Head of caudate nucleus (tissue), 42 donors: ENCODE measurements at regions of chr3 and their contacts with region 1.

Region 1: DNA sequence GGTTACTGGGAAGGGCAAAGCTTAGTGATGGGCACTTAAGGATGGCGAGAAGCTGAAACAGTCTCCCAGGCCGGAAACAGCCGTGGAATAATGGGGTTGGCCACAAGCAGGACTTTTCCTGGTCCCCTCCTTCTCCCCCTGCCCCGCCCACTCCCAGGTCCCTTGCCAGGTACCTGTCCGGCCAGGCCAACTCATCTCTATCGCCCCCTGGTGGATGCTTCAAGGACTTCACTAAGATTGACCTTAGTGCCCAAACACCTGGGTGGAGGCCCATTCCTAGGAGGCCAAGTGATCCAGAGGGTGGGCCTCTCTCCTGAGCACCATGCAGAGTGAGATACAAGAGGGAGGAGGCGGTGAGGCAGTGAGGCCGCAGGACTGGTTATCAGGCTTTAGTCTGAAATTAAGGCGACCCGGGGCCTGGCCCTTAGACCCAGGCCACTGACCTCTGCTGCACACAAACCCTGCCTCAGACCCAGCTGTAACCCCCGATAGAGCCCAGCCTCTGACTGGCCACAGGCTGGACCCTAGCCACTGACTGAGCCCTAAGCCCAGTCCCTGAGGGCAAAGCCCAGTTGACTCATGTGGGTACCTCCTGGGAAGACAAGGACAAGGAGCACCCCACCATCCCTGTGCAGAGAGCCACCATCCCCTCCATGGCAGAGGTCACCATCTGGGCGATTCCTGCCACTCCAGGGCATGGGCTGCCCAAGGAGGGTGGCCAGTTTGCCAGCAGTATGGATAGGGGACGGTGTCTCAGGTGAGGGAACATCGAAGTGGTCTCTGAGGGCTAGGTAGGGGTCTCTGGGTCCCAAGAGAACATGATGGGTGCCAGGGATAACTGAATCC is 37.6 kb downstream of the VIPR1 start:
- DNase-seq: peak in 26 of 42 donors; percentile 16 to 78 (median 45)

Region 2: GRCh38 chr3:42229942-42230688 is 310.0 kb before region 1 on chr3:
- intact Hi-C with region 1: loop called (anchors 10 kb)
- DNase-seq: peak in 18 of 42 donors; percentile 15 to 65 (median 46)

Region 3: GRCh38 chr3:42502429-42503250 is 37.5 kb before region 1 on chr3 and contains the start of gene VIPR1:
- intact Hi-C with region 1: loop called (anchors 5 kb)
- DNase-seq: peak; percentile 72 to 97 (median 92)